Activated B cell treated with CpG ODN at 0.5 μM for 24 hours (primary cell): ENCODE measurements at regions of chr6 and their contacts with region 1.

Region 1: DNA sequence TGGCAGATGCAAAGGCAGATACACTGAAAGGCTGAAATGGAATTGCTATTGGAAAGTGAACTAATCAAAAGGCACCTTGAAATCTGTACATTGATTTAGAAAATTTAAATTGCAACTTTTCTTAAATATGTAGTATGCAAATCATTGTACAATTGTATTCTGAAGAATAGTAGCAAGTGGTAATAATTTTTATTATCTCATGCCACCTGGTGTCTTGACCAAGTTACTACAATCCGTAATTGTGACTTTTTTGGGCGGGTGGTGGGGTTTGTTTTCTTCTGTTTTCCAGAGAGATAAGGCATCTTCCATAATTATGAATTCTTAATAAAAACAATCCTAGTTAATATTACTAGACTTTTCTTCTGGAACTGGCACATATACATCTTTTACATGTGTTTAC is 12.5 kb upstream of the BCKDHB start:
- DNase-seq: no peak
- ATAC-seq: peak; percentile 45
- H3K4me3 Mint-ChIP-seq: no peak overlapping the region
- H3K27ac Mint-ChIP-seq: no peak overlapping the region
- H3K4me1 Mint-ChIP-seq: peaks cover 3% of the 10 kb centered on the region
- H3K27me3 Mint-ChIP-seq: peaks cover 4% of the 10 kb centered on the region
- CTCF ChIP-seq: no peak

Region 2: GRCh38 chr6:79570129-79571029 is 523.6 kb before region 1 on chr6:
- CTCF ChIA-PET with region 1: no interaction called
- POLR2A ChIA-PET with region 1: no interaction called
- intact Hi-C with region 1: loop called (anchors 1 kb)
- DNase-seq: no peak
- ATAC-seq: no peak
- H3K4me3 Mint-ChIP-seq: no peak overlapping the region
- H3K27ac Mint-ChIP-seq: no peak overlapping the region
- H3K4me1 Mint-ChIP-seq: peaks cover 3% of the 10 kb centered on the region
- H3K27me3 Mint-ChIP-seq: peaks cover 3% of the 10 kb centered on the region
- CTCF ChIP-seq: no peak

Region 3: GRCh38 chr6:79869600-79870084 is 224.4 kb before region 1 on chr6:
- CTCF ChIA-PET with region 1: interaction called, 4 read pairs
- POLR2A ChIA-PET with region 1: no interaction called
- intact Hi-C with region 1: loop called (anchors 2 kb)
- DNase-seq: peak; percentile 65
- ATAC-seq: peak; percentile 100
- H3K4me3 Mint-ChIP-seq: peak overlapping the region; percentile 65
- H3K27ac Mint-ChIP-seq: no peak overlapping the region
- H3K4me1 Mint-ChIP-seq: peaks cover 10% of the 10 kb centered on the region
- H3K27me3 Mint-ChIP-seq: peaks cover 4% of the 10 kb centered on the region
- CTCF ChIP-seq: peak; percentile 71

Region 4: DNA sequence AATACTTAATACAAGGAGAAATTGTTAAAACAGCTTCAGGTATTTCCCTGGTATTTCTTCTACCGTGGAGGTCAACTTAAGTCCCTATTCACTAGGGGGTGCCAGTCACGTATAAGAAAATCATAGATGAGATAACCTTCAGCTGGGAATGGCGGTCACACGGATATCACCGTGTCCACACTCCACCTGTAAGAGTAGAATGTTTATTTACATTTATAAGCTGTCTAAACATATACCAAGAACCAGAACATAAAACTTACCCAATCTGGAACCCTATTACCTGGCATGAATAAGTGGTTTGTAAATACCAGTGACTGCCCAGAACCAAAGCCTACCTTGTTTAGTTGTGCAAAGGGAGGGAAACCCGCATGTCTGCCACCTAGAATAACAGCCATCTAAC is 144.8 kb before region 1 on chr6:
- CTCF ChIA-PET with region 1: interaction called, 12 read pairs
- POLR2A ChIA-PET with region 1: no interaction called
- intact Hi-C with region 1: loop called (anchors 1 kb)
- DNase-seq: no peak
- ATAC-seq: no peak
- H3K4me3 Mint-ChIP-seq: no peak overlapping the region
- H3K27ac Mint-ChIP-seq: no peak overlapping the region
- H3K4me1 Mint-ChIP-seq: peaks cover 19% of the 10 kb centered on the region
- H3K27me3 Mint-ChIP-seq: peaks cover 44% of the 10 kb centered on the region
- CTCF ChIP-seq: no peak

Region 5: GRCh38 chr6:80077067-80077466 is 16.9 kb before region 1 on chr6:
- CTCF ChIA-PET with region 1: no interaction called
- POLR2A ChIA-PET with region 1: no interaction called
- intact Hi-C with region 1: no loop called
- DNase-seq: no peak
- ATAC-seq: no peak
- H3K4me3 Mint-ChIP-seq: no peak overlapping the region
- H3K27ac Mint-ChIP-seq: no peak overlapping the region
- H3K4me1 Mint-ChIP-seq: no peaks in the 10 kb centered on the region
- H3K27me3 Mint-ChIP-seq: no peaks in the 10 kb centered on the region
- CTCF ChIP-seq: no peak